ENCODE measurements at regions of chr1 and their contacts with region 1.

Region 1: DNA sequence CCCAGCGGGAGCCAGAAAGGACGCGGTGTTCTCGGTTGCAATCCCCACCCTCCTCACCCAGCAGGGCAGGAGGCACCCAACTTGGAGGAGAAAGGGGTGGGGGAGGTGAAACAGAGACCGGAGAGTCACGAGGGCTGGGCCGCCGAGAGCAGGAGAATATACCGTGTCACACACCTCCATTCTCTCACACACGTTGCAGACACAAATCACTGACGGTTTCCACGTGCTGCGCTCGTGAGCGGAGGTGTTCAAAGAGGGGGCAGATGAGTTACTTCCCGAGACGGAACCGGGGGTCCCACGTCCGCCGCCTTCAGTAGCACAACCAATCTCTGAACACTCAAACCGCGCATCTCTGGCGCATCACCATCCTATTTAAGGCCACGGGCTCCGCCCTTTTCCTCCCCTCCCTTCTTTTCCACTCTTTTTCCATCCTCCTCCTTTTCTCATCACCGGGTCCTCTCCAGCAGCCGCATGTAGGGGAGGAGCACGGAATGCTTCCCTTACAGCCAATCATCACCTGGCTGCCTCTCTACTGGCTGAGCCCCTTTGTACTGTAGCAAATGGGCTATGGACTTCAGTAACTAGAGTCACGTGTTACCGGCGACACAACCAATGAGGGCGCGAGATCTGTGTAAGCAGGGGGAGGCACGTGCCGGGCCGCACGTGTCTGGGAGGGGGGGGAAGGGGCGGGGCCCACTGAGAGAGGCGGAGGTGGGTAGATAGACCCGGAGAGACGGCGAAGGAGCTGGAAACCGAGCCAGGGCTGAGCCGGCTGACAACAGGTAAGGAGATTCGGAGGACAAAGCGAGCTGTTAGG is at the start of gene CIART:
- DNase-seq: peak; percentile 99
- H3K4me3 ChIP-seq: peak within 1 kb of the TSS; percentile 42 to 71 (median 64)
- H3K27ac ChIP-seq: peak within 1 kb of the TSS; percentile 94 to 96 (median 95)
- H3K4me1 ChIP-seq: peaks cover 0 to 34% (median 29%) of the 10 kb centered on the region in 4 donors
- H3K27me3 ChIP-seq: no peaks in the 10 kb centered on the region
- CTCF ChIP-seq: no peak
- EP300 ChIP-seq: peak; percentile 29 to 91 (median 69)
- POLR2A ChIP-seq: peak; percentile 73 to 92
- total RNA-seq, gene CIART: 11.4 to 15.3 (median 13.5) TPM

Region 2: GRCh38 chr1:150162862-150163706 is 119.0 kb before region 1 on chr1:
- intact Hi-C with region 1: loop called (anchors 5 kb)
- DNase-seq: peak; percentile 98
- H3K4me3 ChIP-seq: peak overlapping the region; percentile 12 to 38 (median 34)
- H3K27ac ChIP-seq: peak overlapping the region; percentile 98 to 100 (median 99)
- H3K4me1 ChIP-seq: peaks cover 0 to 78% (median 75%) of the 10 kb centered on the region in 4 donors
- H3K27me3 ChIP-seq: no peaks in the 10 kb centered on the region
- CTCF ChIP-seq: peak in 3 of 4 experiments; percentile 14 to 30 (median 25)
- EP300 ChIP-seq: peak in 2 of 4 donors; percentile 34 to 91
- POLR2A ChIP-seq: peak; percentile 91 to 92

Region 3: DNA sequence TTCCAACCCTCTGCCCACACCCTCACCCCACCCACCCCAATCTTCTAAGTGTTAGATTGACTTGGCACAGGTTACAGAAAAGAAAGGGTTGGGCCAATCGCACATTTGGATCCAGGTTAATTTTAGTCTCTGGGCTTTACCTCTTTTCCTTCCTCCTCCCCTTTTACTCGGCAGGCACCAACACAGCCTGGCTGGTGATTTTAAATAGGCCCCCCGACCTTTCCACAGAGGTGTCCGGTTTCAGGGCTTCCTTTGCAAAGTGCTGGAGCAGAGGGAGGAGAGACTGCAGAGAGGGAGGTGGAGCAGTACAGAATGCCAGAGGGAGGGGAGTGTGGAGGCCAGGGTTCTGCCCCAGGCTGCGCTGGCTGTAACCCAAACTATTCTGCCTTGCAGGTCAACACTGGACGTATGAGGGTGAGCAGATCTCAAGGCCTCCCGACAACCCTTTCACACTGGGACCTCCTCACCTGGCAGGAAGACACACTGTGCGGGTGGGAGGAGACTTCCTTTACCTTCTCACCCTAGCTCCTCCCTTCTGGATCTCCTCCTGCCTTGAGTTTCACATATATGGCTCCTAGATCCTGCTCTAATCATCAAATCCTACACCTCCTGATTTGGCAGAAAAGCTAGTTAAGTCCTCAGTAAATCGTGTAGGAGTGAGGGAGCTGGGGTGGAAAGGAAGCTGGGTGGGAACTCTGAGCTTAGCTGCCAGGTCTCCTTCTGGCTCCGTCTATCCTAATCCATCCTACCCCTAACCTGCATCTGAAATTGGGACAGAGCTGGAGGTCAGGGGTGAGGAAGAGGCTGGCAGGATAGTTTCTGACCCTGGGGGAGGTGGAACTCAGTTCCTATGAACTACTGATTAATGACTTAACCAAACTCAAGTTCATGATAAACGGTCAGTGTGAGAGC is 22.0 kb before region 1 on chr1:
- intact Hi-C with region 1: loop called (anchors 1 kb)
- DNase-seq: peak; percentile 63
- H3K4me3 ChIP-seq: no peak overlapping the region
- H3K27ac ChIP-seq: peak overlapping the region in 3 of 4 donors; percentile 73 to 79 (median 76)
- H3K4me1 ChIP-seq: peaks cover 0 to 42% (median 14%) of the 10 kb centered on the region in 4 donors
- H3K27me3 ChIP-seq: peaks cover 0 to 14% (median 0%) of the 10 kb centered on the region in 3 donors
- CTCF ChIP-seq: no peak
- EP300 ChIP-seq: no peak
- POLR2A ChIP-seq: no peak

Region 4: DNA sequence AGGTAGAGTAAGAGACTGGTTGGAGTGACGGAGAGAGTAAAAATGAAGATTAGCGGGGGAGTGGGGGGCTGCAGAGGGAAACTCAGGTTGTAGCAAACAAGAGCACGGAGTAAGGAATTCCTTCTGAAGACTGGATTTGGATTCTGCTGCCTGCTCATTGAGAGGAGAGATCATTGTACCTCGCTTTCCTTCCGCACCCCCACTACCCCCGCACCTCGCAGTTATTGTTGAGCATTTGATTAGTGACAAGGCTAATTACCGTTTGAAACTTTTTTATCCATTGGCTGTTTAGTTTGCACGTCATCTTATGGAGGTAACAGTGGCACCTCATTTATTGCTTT is 39.8 kb after region 1 on chr1:
- intact Hi-C with region 1: loop called (anchors 5 kb)
- DNase-seq: no peak
- H3K4me3 ChIP-seq: peak overlapping the region; percentile 68 to 86 (median 78)
- H3K27ac ChIP-seq: peak overlapping the region; percentile 86 to 91 (median 88)
- H3K4me1 ChIP-seq: peaks cover 0 to 22% (median 14%) of the 10 kb centered on the region in 4 donors
- H3K27me3 ChIP-seq: no peaks in the 10 kb centered on the region
- CTCF ChIP-seq: no peak
- EP300 ChIP-seq: no peak
- POLR2A ChIP-seq: no peak

Region 5: GRCh38 chr1:150363426-150364230 is 81.6 kb after region 1 on chr1 and contains the start of gene RPRD2:
- intact Hi-C with region 1: loop called (anchors 5 kb)
- DNase-seq: peak; percentile 100
- H3K4me3 ChIP-seq: peak within 1 kb of the TSS; percentile 62 to 80 (median 70)
- H3K27ac ChIP-seq: peak within 1 kb of the TSS; percentile 90 to 98 (median 97)
- H3K4me1 ChIP-seq: peaks cover 0 to 30% (median 15%) of the 10 kb centered on the region in 4 donors
- H3K27me3 ChIP-seq: no peaks in the 10 kb centered on the region
- CTCF ChIP-seq: no peak
- EP300 ChIP-seq: peak in 2 of 4 donors; percentile 32 to 40
- POLR2A ChIP-seq: peak; percentile 57 to 70
- total RNA-seq, gene RPRD2: 16.2 to 26.7 (median 21.2) TPM

Region 6: DNA sequence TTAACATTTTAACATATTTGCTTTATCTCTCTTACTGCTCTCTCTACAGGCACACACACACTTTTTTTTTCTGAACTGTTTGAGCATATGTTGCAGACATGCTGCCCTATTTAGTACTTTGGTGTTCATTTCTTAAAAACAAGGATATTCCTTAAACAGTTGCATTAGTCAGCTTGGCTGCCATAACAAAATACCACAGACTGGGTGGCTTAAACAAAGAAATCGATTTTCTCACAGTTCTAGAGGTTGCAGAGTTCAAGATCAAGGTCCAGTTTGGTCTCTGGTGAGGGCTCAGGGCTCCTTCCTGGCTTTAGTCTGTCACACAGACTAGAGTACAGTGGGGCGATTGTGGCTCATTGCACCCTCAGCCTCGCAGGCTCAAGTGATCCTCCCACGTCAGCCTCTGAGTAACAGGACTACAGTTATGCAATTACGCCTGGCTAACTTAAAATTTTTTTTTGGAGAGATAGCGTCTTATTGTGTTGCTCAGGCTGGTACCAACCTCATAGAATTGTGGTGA is 128.6 kb after region 1 on chr1:
- intact Hi-C with region 1: no loop called
- DNase-seq: no peak
- H3K4me3 ChIP-seq: no peak overlapping the region
- H3K27ac ChIP-seq: no peak overlapping the region
- H3K4me1 ChIP-seq: peaks cover 0 to 29% (median 23%) of the 10 kb centered on the region in 4 donors
- H3K27me3 ChIP-seq: no peaks in the 10 kb centered on the region
- CTCF ChIP-seq: no peak
- EP300 ChIP-seq: no peak
- POLR2A ChIP-seq: no peak

Region 7: GRCh38 chr1:151391079-151391563 is 1109.1 kb after region 1 on chr1:
- intact Hi-C with region 1: no loop called
- DNase-seq: no peak
- H3K4me3 ChIP-seq: no peak overlapping the region
- H3K27ac ChIP-seq: no peak overlapping the region
- H3K4me1 ChIP-seq: no peaks in the 10 kb centered on the region
- H3K27me3 ChIP-seq: no peaks in the 10 kb centered on the region
- CTCF ChIP-seq: no peak
- EP300 ChIP-seq: no peak
- POLR2A ChIP-seq: no peak

Measured in sigmoid colon (tissue), 7 donors.